ENCODE measurements at regions of chr10 and their contacts with region 1.

Region 1: DNA sequence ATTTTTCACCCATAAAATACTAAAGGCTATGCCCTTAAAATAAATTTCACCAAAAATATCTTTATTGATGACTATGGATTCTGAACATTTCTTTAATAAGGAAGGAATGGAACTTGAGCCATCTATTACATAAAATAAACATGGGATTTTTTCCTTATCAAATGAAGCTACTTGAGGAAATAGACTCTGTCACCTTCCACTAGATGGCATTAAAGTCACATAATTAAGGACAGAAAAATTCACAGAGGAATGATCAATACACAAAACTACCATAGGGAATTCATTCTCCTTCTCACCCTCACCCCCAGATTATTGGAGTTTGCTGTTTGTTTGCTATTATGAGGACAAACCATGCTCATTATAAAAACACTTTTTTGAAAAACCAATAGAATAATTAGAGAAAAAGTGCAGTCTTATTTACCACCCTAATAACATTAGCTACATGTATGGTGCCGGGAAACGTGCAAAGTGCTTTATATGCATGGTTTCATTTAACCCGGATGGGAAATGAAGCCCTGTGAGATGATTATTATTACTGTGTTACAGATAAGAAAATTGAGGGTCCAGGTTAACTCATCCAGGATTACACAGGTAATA is 21.1 kb upstream of the FOXI2 start:
- DNase-seq: no peak
- H3K4me3 ChIP-seq: no peak overlapping the region
- H3K27ac ChIP-seq: no peak overlapping the region
- H3K4me1 ChIP-seq: no peaks in the 10 kb centered on the region
- H3K27me3 ChIP-seq: no peaks in the 10 kb centered on the region
- CTCF ChIP-seq: peak; percentile 16 to 40 (median 36)
- EP300 ChIP-seq: no peak
- POLR2A ChIP-seq: no peak

Region 2: DNA sequence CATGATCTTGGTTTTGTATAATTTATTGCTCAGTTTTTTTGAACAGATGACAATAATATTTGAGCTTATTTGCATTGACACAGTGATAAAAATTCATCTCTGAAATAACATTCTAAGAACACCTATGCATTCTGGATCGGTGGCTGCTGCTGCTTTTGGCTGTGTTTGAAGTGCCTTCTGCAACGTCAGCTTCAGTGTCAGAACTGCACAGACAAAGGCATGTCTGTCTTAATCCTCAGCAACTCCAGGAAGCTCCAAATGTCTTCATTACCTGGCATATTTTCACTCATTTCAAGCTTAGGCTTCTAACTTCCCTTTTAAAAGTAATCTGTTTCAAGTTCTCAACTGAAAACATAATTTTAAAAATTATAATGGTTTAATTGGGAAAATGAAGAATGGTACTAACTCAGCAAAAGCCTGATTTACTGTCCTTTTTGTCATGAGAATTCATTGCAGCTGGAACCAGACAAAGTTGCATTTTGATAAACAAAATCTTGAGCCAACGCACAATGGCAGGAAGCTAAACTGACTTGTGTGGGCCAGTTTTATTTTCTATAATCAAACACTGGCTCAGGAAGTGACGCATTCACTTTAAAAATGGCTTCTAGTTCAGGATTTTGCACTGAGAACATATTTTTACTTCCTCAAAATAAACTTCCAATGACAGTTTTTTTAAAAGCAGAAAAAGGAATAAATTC is 128.1 kb before region 1 on chr10:
- in situ Hi-C with region 1: no loop called
- intact Hi-C with region 1: no loop called
- DNase-seq: no peak
- H3K4me3 ChIP-seq: no peak overlapping the region
- H3K27ac ChIP-seq: no peak overlapping the region
- H3K4me1 ChIP-seq: no peaks in the 10 kb centered on the region
- H3K27me3 ChIP-seq: peaks cover 3% of the 10 kb centered on the region
- CTCF ChIP-seq: no peak
- EP300 ChIP-seq: no peak
- POLR2A ChIP-seq: no peak

Region 3: GRCh38 chr10:128011175-128011979 is 295.5 kb after region 1 on chr10:
- in situ Hi-C with region 1: loop called in 1 of 4 experiments (anchors 25 kb)
- intact Hi-C with region 1: no loop called
- DNase-seq: peak; percentile 86
- H3K4me3 ChIP-seq: no peak overlapping the region
- H3K27ac ChIP-seq: no peak overlapping the region
- H3K4me1 ChIP-seq: peaks cover 0 to 14% (median 2%) of the 10 kb centered on the region in 4 donors
- H3K27me3 ChIP-seq: no peaks in the 10 kb centered on the region
- CTCF ChIP-seq: peak; percentile 95 to 99 (median 97)
- EP300 ChIP-seq: no peak
- POLR2A ChIP-seq: no peak